AG04449 (cell line): ENCODE measurements at regions of chr11 and their contacts with region 1.

Region 1: DNA sequence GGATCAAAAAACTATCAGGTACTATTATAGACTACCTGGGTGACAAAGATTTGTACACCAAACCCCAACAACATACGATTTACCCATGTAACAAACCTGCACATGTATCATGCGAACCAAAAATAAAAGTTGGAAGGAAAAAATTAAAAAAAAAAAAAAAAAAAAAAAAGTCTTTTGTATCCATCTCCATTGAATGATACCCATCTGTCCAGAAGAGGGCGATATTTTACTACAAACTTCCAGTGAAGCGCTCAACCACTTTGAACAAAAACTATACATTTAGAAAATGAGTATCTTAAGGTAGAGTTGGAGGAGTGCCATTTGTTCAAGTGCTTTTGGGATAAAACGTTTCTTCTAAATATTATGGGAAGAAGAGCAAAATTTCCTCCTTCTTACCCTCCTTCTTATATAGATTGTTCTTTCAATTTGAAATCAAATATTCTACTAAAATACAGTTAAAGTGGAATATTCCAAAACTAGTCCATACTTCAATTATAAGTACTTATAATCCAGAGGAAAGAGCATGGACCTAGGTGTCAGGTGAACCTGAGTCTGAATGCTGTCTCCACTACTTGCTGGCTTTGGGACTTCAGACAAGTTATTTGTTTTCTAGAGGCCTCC is 23.3 kb downstream of the ARL14EP start:
- DNase-seq: no peak
- H3K4me3 ChIP-seq: no peak overlapping the region
- CTCF ChIP-seq: peak; percentile 38

Region 2: DNA sequence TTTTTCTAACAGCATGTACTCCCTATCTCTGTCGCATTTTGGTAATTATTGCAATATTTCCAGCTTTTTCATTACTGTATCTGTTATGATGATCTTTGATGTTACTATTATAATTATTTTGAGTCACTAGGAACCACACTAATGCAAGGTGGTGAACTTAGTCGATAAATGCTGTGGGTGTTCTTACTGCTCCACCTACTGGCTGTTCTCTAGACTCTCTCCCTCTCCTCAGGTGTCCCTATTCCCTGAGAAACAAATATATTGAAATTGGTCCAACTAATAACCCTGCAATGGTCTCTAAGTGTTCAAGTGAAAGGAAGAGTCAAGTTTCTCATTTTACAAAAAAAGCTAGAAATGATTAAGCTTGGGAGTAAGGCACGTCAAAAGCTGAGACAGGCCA is 12.8 kb before region 1 on chr11:
- CTCF ChIA-PET with region 1: interaction called, 20 read pairs
- POLR2A ChIA-PET with region 1: no interaction called
- DNase-seq: no peak
- H3K4me3 ChIP-seq: no peak overlapping the region
- CTCF ChIP-seq: peak; percentile 26

Region 3: GRCh38 chr11:30855383-30856006 is 509.3 kb after region 1 on chr11:
- CTCF ChIA-PET with region 1: interaction called, 10 read pairs
- POLR2A ChIA-PET with region 1: no interaction called
- DNase-seq: no peak
- H3K4me3 ChIP-seq: no peak overlapping the region
- CTCF ChIP-seq: no peak

Region 4: DNA sequence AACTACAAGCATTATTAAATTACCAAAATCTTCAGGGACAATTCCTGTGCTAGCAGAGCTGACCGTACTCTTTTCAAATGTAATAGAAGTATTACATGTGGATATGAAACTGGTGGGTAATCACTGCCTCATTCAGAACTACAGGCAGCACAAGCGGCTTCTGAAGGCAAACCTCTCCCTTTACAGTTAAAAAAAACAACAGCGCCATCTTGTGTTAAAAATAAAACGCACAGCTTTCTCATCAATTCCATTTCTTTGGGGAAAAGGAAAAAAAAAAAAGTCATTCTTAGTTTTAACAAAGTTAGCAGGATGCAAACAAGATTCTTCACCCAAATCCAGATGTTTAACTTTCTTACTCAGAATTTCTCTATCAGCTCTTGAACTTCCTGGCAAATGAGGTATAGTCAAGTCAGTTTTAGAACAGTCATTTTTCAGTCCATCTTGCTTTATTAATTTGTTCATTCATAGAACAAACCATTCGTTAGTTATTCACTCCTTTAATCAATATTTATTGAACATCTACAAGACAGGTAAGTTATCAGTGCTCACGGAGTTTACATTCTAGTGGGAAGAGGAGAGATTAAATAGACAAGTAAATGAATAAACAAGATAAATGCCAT is 571.8 kb after region 1 on chr11:
- CTCF ChIA-PET with region 1: interaction called, 43 read pairs
- POLR2A ChIA-PET with region 1: no interaction called
- DNase-seq: no peak
- H3K4me3 ChIP-seq: no peak overlapping the region
- CTCF ChIP-seq: peak; percentile 28